Naive thymus-derived CD4-positive, alpha-beta T cell (primary cell): ENCODE measurements at regions of chr9 and their contacts with region 1.

Region 1: DNA sequence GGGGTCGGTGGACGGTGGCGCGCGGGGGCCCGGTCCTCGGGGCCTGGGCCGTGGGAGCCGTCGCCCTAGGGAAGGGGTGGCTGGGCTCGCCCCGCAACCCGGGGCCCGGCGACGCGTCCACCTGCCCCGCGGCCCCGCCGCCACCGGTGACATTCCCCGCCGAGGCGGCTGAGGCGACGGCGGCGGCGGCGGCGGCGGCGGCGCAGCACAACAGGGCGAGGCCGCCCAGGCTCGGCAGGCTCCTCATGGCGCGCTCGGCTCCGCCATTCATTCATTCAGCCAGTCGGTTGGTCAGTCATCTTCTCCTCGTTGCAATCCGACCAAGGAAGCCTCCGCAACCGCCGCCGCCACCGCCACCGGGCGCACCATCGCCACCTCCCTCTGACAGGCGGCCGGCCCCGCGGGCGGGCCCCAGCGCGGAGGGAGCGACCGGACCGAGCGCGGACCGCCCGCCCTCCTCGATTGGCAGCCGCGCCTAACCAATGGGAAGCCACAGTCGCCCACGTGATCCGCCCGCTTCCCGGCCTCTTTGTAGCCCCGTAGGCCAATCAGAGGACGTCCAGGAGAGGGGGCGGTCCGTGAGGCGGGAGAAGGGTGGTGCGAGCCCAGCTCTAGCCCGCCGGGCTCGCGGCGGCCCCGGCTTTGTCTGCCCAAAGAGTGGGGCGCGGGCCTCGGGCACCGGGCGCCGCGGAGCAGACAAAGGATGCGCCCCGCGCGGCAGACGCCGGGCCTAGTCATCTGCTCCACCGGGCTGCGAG is at the start of gene MEGF9:
- DNase-seq: peak; percentile 90 to 97 (median 94)
- ATAC-seq: peak; percentile 98
- H3K4me3 ChIP-seq: peak within 1 kb of the TSS; percentile 85
- H3K4me3 Mint-ChIP-seq: peak within 1 kb of the TSS; percentile 82 to 98 (median 87)
- H3K27ac ChIP-seq: peak within 1 kb of the TSS; percentile 79
- H3K27ac Mint-ChIP-seq: peak within 1 kb of the TSS; percentile 31 to 98 (median 87)
- H3K4me1 ChIP-seq: peaks cover 22% of the 10 kb centered on the region in 2 donors
- H3K4me1 Mint-ChIP-seq: peaks cover 18 to 43% (median 36%) of the 10 kb centered on the region in 7 donors
- H3K27me3 ChIP-seq: no peaks in the 10 kb centered on the region
- H3K27me3 Mint-ChIP-seq: no peaks in the 10 kb centered on the region
- total RNA-seq, gene MEGF9: 9.5 to 35.4 (median 11.1) TPM

Region 2: GRCh38 chr9:120579750-120580590 is 134.3 kb before region 1 on chr9 and contains the start of gene CDK5RAP2:
- CTCF ChIA-PET with region 1: no interaction called
- POLR2A ChIA-PET with region 1: no interaction called
- intact Hi-C with region 1: loop called (anchors 1 kb)
- DNase-seq: peak; percentile 77 to 94 (median 92)
- ATAC-seq: peak; percentile 99
- H3K4me3 ChIP-seq: peak within 1 kb of the TSS; percentile 85
- H3K4me3 Mint-ChIP-seq: peak within 1 kb of the TSS; percentile 86 to 98 (median 94)
- H3K27ac ChIP-seq: peak within 1 kb of the TSS; percentile 81
- H3K27ac Mint-ChIP-seq: peak within 1 kb of the TSS; percentile 88 to 95 (median 91)
- H3K4me1 ChIP-seq: peaks cover 15 to 17% of the 10 kb centered on the region in 2 donors
- H3K4me1 Mint-ChIP-seq: peaks cover 29 to 68% (median 62%) of the 10 kb centered on the region in 7 donors
- H3K27me3 ChIP-seq: no peaks in the 10 kb centered on the region
- H3K27me3 Mint-ChIP-seq: peaks cover 0 to 3% (median 0%) of the 10 kb centered on the region in 5 donors
- total RNA-seq, gene CDK5RAP2: 62.2 to 98.1 (median 78.1) TPM

Region 3: DNA sequence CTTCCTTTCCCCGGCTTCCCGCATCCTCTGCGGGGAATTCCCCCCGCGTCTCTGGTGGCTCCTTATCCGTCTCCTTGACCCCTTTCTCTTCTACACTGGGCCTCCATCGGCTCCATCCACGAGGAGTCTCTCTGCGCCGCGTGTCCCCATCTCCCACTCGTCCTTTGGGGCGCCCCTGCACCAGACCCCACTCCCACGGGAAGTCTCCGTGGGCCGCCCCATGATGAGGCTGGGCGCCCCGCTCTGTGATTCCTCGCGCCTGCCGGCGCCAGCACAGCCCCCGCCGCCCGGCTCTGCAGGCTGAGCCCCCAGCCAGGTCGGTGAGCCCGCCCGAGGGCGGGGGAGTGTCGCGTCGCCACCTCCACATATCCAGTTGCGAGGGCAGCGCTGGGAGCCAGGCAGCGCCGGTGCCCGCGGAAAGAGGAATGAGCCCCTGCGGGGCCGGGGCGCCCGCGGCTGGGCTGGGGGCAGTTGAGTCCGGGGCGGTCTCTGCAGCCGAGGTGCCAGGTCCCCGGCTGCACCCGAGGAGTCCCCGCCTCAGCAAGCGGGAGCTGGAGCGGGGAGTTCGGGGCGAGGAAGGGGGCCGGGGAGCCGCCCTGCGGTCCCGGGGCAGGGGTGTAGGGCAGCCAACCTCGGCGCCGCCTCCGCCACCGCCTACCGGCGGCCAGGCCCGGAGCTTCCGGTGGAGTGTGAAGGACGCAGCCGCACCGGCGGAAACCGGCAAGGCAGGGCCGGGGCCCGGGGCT is 214.4 kb after region 1 on chr9:
- CTCF ChIA-PET with region 1: no interaction called
- POLR2A ChIA-PET with region 1: interaction called, 3 read pairs
- intact Hi-C with region 1: loop called (anchors 2 to 5 kb)
- DNase-seq: peak; percentile 63 to 86 (median 74)
- ATAC-seq: peak; percentile 58
- H3K4me3 ChIP-seq: peak overlapping the region; percentile 79
- H3K4me3 Mint-ChIP-seq: peak overlapping the region; percentile 90 to 100 (median 96)
- H3K27ac ChIP-seq: peak overlapping the region; percentile 97
- H3K27ac Mint-ChIP-seq: peak overlapping the region; percentile 95 to 100 (median 99)
- H3K4me1 ChIP-seq: peaks cover 62 to 84% of the 10 kb centered on the region in 2 donors
- H3K4me1 Mint-ChIP-seq: peaks cover 57 to 95% (median 86%) of the 10 kb centered on the region in 7 donors
- H3K27me3 ChIP-seq: no peaks in the 10 kb centered on the region
- H3K27me3 Mint-ChIP-seq: no peaks in the 10 kb centered on the region